Esophagus squamous epithelium (tissue), 5 donors: ENCODE measurements at regions of chr18 and their contacts with region 1.

Region 1: DNA sequence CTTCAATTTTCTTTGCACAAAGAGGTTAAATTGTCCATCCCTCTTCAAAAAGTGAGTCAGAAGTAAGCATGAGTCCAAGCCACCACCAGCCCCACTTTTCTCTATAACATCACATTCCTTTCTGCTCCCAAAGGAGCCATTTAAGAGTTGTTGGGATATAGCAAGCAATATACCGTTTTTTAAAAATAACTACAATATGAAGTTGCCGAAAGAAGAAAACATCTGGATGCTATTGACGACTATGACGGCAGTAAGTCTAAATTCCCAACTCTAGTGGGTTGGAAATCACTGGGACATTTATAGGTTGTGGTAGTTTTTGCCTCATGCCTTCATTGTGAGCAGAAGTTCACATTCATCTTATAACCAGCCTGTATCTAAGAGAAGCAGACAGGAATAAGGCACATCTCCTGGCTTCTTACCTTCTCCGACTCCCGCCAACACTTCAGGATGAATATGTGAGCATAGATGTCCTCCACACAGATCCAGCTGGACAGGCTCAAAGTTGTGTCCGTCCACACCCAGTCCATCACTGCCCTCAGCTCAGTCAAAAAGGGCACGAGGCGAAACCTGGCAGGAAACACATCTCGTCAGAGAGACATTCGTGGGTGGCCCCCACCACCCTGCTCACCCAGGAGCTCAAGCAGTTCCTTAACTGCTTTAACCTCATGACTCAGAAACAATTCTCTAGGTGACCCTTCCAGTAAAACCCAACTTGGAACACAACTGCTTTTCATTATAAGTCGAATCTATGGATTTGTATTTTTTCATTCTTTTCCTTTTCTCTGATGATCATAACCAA is 163.6 kb downstream of the NAPG start:
- DNase-seq: no peak
- H3K4me3 ChIP-seq: no peak overlapping the region
- H3K27ac ChIP-seq: no peak overlapping the region
- H3K4me1 ChIP-seq: no peaks in the 10 kb centered on the region
- H3K27me3 ChIP-seq: no peaks in the 10 kb centered on the region
- CTCF ChIP-seq: no peak
- POLR2A ChIP-seq: no peak

Region 2: DNA sequence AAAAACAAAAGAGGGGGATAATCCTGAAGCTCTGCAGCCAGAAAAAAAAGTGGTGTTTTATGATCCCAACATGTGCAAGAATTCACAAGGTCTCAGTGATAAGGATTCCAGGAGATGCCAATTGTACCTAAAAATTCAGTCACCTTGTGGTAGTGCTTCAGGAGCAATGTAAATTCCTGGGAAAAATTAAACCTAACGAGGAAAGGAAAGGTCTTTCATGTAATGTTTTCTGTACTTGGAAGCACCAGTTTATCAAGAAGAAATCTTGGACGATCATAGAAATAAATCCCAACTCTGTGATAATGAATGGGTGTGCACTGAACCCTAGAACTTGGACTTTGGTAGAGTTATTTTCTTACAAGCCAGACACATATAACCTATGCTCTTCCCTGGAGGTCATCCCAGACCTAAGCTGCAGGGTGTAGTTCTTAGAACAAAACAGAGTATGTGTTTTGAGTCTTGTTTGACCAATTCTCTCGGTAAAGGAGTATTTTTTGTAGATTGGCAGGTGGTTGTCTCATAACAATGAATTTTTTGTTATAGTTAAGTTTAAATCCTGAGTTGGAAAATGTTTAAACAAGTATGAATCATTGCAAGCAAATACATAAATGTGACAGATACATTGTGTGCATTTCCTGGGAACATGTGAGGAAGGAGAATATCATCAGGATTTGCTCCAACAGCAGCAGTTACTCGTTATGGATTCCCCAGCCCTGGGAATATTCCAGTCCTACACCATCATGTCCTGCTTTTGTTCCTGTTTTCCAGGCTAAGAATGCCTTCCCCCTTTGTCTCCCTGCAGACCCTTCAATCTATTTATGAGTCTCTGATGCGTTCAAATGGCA is 61.0 kb after region 1 on chr18:
- intact Hi-C with region 1: loop called (anchors 10 kb)
- DNase-seq: no peak
- H3K4me3 ChIP-seq: no peak overlapping the region
- H3K27ac ChIP-seq: no peak overlapping the region
- H3K4me1 ChIP-seq: no peaks in the 10 kb centered on the region
- H3K27me3 ChIP-seq: no peaks in the 10 kb centered on the region
- CTCF ChIP-seq: no peak
- POLR2A ChIP-seq: no peak

Region 3: DNA sequence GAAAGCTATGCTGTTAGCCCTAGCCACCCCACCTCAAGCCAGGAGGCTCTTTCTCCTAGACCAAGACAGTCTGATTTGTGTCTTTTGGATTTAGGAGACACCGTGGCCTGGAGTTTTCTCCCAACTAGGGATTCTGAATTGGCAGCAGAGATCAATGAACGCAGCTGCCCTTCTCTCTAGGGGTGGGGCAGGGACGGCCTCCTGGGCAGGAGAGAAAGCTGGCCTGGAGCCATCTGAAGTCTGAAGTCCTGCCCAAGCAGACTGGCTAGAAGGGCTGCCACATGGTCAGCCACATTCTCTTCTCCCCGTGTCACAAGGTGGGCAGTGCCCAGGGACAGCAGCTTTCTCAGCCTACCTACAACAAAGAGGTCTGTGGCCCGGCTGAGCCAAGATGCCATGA is 414.9 kb after region 1 on chr18:
- intact Hi-C with region 1: no loop called
- DNase-seq: no peak
- H3K4me3 ChIP-seq: no peak overlapping the region
- H3K27ac ChIP-seq: no peak overlapping the region
- H3K4me1 ChIP-seq: no peaks in the 10 kb centered on the region
- H3K27me3 ChIP-seq: no peaks in the 10 kb centered on the region
- CTCF ChIP-seq: no peak
- POLR2A ChIP-seq: no peak